Common myeloid progenitor, CD34-positive (primary cell): ENCODE measurements at regions of chr10 and their contacts with region 1.

Region 1: GRCh38 chr10:30359373-30360206 is 10.5 kb upstream of the MTPAP start:
- DNase-seq: peak; percentile 62 to 72 (median 64)
- H3K4me3 ChIP-seq: no peak overlapping the region
- H3K27ac ChIP-seq: no peak overlapping the region
- H3K4me1 ChIP-seq: no peaks in the 10 kb centered on the region
- H3K27me3 ChIP-seq: no peaks in the 10 kb centered on the region

Region 2: DNA sequence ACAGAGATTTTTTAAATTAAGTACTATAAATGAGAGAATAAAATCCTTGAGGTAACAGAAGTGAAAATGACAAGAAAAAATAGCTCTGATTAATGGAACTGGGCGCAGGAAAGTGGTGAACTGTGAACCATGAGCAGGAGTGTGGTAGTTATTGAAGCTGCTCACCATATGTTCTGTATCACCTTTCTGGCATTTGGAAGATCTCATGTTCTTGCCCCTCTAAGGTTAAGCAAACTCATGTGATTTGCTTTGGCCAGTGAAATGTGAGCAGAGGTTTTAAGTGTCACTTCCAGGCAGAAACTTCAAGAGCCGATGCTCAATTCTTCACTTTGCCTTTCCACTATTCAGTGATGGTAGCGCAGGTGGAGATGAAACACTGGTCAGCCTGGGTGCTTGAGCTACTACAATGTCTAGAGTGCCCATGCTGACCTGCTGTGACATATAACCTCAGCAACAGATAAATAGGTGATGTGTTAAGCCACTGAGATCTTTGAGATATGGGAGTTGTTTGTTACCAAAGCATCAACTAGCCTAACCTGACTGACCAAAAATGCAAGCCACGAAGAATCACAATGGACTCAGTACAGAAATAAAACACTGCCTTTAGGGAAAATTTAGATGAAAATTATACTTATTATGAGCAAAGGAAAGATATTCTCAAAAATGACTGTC is 29.0 kb before region 1 on chr10:
- CTCF ChIA-PET with region 1: no interaction called
- POLR2A ChIA-PET with region 1: no interaction called
- DNase-seq: no peak
- H3K4me3 ChIP-seq: no peak overlapping the region
- H3K27ac ChIP-seq: no peak overlapping the region
- H3K4me1 ChIP-seq: no peaks in the 10 kb centered on the region
- H3K27me3 ChIP-seq: no peaks in the 10 kb centered on the region

Region 3: GRCh38 chr10:30378201-30379006 is 18.8 kb after region 1 on chr10:
- CTCF ChIA-PET with region 1: interaction called, 18 read pairs
- POLR2A ChIA-PET with region 1: no interaction called
- DNase-seq: peak in 2 of 3 donors; percentile 45 to 51
- H3K4me3 ChIP-seq: peak overlapping the region in 3 of 7 experiments; percentile 22 to 46 (median 38)
- H3K27ac ChIP-seq: no peak overlapping the region
- H3K4me1 ChIP-seq: peaks cover 0 to 7% (median 5%) of the 10 kb centered on the region in 4 experiments
- H3K27me3 ChIP-seq: no peaks in the 10 kb centered on the region